Posterior vena cava (tissue), 2 donors: ENCODE measurements at regions of chr2 and their contacts with region 1.

Region 1: DNA sequence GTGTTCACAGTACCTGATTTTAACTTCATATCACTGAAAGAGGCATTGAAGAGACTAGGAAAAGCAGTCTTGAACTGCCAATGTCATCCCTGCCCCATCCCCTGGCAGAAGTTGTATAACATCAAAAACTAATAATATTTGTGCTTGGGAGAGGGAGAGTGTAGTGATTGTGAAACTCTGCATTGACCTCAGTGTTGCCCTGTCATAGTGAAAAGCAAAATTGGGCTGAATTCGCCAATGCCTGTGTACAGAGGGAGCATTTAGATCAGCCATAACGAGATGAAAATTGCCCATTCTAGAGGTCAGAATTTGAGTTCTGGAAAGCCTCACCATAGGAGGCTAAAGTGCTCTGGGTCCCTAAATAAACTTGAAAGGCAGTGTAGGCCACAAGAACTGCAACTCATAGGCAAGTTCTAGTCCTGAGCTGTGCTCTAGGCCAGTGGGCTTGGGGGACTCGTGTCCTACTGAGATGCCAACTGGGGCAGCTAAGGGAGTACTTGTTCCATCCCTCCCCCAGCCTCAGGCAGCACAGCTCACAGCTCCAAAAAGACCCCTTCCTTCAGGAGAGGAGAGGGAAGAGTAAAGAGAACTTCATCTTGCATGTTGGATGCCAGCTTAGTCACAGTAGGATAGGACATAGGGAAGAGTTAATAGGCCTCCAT is 855.6 kb downstream of the TSN start:
- DNase-seq: no peak

Region 2: GRCh38 chr2:122519366-122519765 is 91.7 kb before region 1 on chr2:
- intact Hi-C with region 1: no loop called
- DNase-seq: no peak

Region 3: GRCh38 chr2:122639711-122640110 is 28.6 kb after region 1 on chr2:
- intact Hi-C with region 1: loop called in 1 of 2 experiments (anchors 2 kb)
- DNase-seq: no peak

Region 4: DNA sequence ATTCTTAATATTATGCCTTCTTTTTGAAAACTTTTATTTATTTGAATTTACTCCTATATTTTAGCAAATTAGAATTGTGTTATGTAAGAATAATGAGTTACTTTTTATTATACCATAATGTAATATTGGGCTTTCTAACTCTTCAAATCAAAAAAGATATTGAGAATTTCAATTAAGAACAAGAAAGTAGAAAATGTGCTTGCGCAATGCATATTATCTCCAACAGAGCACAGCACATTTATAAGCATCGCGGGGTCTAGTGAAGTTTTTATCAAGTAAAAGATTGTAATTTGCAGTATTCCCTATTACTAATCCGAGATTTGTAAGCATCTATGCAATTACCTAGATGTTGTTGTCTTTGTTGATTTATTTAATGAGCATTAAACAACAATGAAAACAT is 584.9 kb after region 1 on chr2:
- intact Hi-C with region 1: loop called in 1 of 2 experiments (anchors 5 kb)
- DNase-seq: no peak